CD8-positive, alpha-beta T cell (primary cell): ENCODE measurements at regions of chr14 and their contacts with region 1.

Region 1: GRCh38 chr14:105974902-105975301 is 448.5 kb downstream of the TMEM121 start:
- DNase-seq: peak; percentile 39 to 89 (median 83)
- ATAC-seq: peak; percentile 97
- H3K4me3 ChIP-seq: no peak overlapping the region
- H3K4me3 Mint-ChIP-seq: no peak overlapping the region
- H3K27ac ChIP-seq: no peak overlapping the region
- H3K27ac Mint-ChIP-seq: no peak overlapping the region
- H3K4me1 ChIP-seq: peaks cover 3% of the 10 kb centered on the region
- H3K4me1 Mint-ChIP-seq: peaks cover 6% of the 10 kb centered on the region
- H3K27me3 ChIP-seq: no peaks in the 10 kb centered on the region
- H3K27me3 Mint-ChIP-seq: peaks cover 13% of the 10 kb centered on the region
- CTCF ChIP-seq: peak; percentile 68

Region 2: GRCh38 chr14:105944632-105945610 is 30.0 kb before region 1 on chr14:
- CTCF ChIA-PET with region 1: interaction called, 18 read pairs
- POLR2A ChIA-PET with region 1: interaction called, 3 read pairs
- intact Hi-C with region 1: no loop called
- DNase-seq: peak; percentile 51 to 87 (median 80)
- ATAC-seq: peak; percentile 79
- H3K4me3 ChIP-seq: no peak overlapping the region
- H3K4me3 Mint-ChIP-seq: no peak overlapping the region
- H3K27ac ChIP-seq: no peak overlapping the region
- H3K27ac Mint-ChIP-seq: no peak overlapping the region
- H3K4me1 ChIP-seq: no peaks in the 10 kb centered on the region
- H3K4me1 Mint-ChIP-seq: peaks cover 13% of the 10 kb centered on the region
- H3K27me3 ChIP-seq: no peaks in the 10 kb centered on the region
- H3K27me3 Mint-ChIP-seq: peaks cover 7% of the 10 kb centered on the region
- CTCF ChIP-seq: peak; percentile 88

Region 3: GRCh38 chr14:105989566-105990302 is 14.8 kb after region 1 on chr14:
- CTCF ChIA-PET with region 1: interaction called, 14 read pairs
- POLR2A ChIA-PET with region 1: no interaction called
- intact Hi-C with region 1: no loop called
- DNase-seq: peak in 2 of 9 experiments; percentile 27 to 29
- ATAC-seq: peak; percentile 25
- H3K4me3 ChIP-seq: no peak overlapping the region
- H3K4me3 Mint-ChIP-seq: no peak overlapping the region
- H3K27ac ChIP-seq: no peak overlapping the region
- H3K27ac Mint-ChIP-seq: no peak overlapping the region
- H3K4me1 ChIP-seq: peaks cover 47% of the 10 kb centered on the region
- H3K4me1 Mint-ChIP-seq: peaks cover 52% of the 10 kb centered on the region
- H3K27me3 ChIP-seq: no peaks in the 10 kb centered on the region
- H3K27me3 Mint-ChIP-seq: no peaks in the 10 kb centered on the region
- CTCF ChIP-seq: no peak

Region 4: DNA sequence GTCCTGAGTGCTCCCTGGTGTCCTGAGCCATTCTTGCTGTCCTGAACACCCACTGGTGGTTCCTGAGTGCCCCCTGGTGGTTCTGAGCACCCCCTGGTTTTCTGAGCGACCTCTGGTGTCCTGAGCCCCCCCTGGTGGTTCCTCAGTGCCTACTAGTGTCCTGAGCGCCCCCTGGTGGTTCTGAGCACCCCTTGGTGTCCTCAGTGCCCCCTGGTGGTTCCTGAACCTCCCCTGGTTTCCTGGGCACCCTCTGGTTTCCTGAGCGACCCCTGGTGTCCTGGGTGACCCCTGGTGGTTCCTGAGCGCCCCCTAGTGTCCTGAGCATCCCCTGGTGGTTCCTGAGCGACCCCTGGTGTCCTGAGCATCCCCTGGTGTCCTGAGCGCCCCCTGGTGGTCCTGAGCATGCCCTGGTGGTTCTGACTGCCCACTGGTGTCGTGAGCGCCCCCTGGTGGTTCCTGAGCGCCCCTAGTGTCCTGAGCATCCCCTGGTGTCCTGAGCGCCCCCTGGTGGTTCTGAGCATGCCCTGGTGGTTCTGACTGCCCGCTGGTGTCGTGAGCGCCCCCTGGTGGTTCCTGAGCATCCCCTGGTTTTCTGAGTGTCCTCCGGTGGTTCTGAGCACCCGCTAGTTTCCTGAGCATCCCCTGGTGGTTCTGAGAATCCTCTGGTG is 24.6 kb after region 1 on chr14:
- CTCF ChIA-PET with region 1: interaction called, 42 read pairs
- POLR2A ChIA-PET with region 1: no interaction called
- intact Hi-C with region 1: loop called in 1 of 2 experiments (anchors 1 kb)
- DNase-seq: peak in 7 of 9 experiments; percentile 44 to 88 (median 85)
- ATAC-seq: peak; percentile 86
- H3K4me3 ChIP-seq: no peak overlapping the region
- H3K4me3 Mint-ChIP-seq: peak overlapping the region; percentile 3
- H3K27ac ChIP-seq: no peak overlapping the region
- H3K27ac Mint-ChIP-seq: no peak overlapping the region
- H3K4me1 ChIP-seq: peaks cover 28% of the 10 kb centered on the region
- H3K4me1 Mint-ChIP-seq: peaks cover 38% of the 10 kb centered on the region
- H3K27me3 ChIP-seq: no peaks in the 10 kb centered on the region
- H3K27me3 Mint-ChIP-seq: no peaks in the 10 kb centered on the region
- CTCF ChIP-seq: peak; percentile 70

Region 5: DNA sequence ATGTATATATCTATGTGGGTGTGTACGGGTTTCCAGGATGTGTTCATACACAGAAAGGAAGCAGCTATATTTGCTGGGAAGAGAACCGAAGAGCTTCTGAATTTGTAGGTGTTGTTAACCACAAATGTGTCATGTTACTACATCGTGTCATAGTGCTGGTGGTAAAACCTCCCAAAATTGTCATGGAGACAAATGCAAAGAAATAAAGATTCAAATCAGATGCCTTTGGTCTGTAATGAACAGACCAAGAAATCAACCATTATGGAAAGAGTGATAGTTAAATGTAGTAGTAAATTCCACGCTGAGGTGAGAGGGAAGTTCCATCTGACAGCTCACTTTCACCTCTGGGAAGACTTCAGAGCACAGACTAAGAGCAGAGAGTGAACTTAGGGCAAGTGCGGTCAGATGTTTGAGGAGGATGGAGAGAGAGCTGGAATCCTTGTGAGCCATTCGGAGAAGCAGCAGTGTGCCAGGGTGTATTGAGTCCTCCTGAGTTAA is 39.0 kb after region 1 on chr14:
- CTCF ChIA-PET with region 1: interaction called, 48 read pairs
- POLR2A ChIA-PET with region 1: no interaction called
- intact Hi-C with region 1: loop called (anchors 1 kb)
- DNase-seq: peak in 2 of 9 experiments; percentile 23 to 40
- ATAC-seq: peak; percentile 62
- H3K4me3 ChIP-seq: no peak overlapping the region
- H3K4me3 Mint-ChIP-seq: no peak overlapping the region
- H3K27ac ChIP-seq: no peak overlapping the region
- H3K27ac Mint-ChIP-seq: no peak overlapping the region
- H3K4me1 ChIP-seq: no peaks in the 10 kb centered on the region
- H3K4me1 Mint-ChIP-seq: peaks cover 10% of the 10 kb centered on the region
- H3K27me3 ChIP-seq: no peaks in the 10 kb centered on the region
- H3K27me3 Mint-ChIP-seq: peaks cover 4% of the 10 kb centered on the region
- CTCF ChIP-seq: no peak

Region 6: DNA sequence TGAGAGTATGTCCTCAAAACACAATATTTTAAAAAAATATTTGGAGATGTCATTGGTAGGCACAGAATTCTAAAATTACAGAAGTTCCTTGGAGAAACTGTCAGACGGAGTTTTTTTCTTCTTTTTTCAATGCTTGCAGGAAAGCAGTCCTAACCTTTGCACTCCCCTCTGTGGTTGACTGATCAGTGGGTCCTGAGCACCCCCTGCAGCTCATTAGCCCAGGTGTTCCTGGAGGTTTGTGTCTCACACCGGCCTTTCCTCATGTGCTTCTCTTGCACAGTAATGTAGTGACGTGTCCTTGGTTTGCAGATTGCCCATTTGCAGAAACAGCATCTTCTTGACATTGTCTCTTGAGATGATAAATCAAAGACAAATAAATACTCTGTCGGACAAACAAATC is 64.5 kb after region 1 on chr14:
- CTCF ChIA-PET with region 1: interaction called, 11 read pairs
- POLR2A ChIA-PET with region 1: no interaction called
- intact Hi-C with region 1: loop called (anchors 1 kb)
- DNase-seq: peak; percentile 16 to 68 (median 57)
- ATAC-seq: peak; percentile 81
- H3K4me3 ChIP-seq: no peak overlapping the region
- H3K4me3 Mint-ChIP-seq: no peak overlapping the region
- H3K27ac ChIP-seq: no peak overlapping the region
- H3K27ac Mint-ChIP-seq: no peak overlapping the region
- H3K4me1 ChIP-seq: no peaks in the 10 kb centered on the region
- H3K4me1 Mint-ChIP-seq: peaks cover 2% of the 10 kb centered on the region
- H3K27me3 ChIP-seq: no peaks in the 10 kb centered on the region
- H3K27me3 Mint-ChIP-seq: no peaks in the 10 kb centered on the region
- CTCF ChIP-seq: peak; percentile 59

Region 7: DNA sequence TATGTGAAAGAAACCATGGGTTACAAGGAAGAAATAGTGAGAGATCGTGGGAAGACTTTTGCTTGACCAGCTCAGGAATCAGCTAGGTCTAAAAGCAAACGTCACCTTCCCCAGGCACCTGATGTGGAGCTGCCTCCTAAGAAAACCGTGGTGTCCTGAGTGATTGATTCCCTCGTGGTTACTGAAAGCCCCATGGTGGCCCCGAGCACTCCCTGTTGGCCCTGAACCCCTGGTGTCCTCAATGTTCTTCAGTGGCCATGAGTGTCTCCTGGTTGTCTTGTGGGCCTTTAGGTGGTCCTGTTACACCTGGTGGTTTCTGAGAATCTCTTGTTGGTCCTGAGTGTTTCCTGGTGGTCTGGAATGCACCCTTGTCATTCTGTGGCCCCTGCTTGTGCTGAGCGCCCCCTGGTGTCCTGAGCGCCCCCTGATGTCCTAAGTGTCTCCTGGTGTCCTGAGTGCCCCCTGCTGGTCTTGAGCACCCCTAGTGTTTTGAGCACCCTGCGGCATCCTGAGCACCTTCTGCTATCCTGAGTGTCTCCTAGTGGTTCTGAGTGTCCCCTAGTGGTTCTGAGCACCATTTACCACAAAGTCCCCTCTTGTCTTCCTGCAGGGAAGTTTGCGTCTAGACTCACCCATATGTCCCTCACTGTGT is 70.2 kb after region 1 on chr14:
- CTCF ChIA-PET with region 1: interaction called, 3 read pairs
- POLR2A ChIA-PET with region 1: no interaction called
- intact Hi-C with region 1: loop called in 1 of 2 experiments (anchors 1 kb)
- DNase-seq: peak; percentile 58 to 87 (median 82)
- ATAC-seq: peak; percentile 99
- H3K4me3 ChIP-seq: no peak overlapping the region
- H3K4me3 Mint-ChIP-seq: no peak overlapping the region
- H3K27ac ChIP-seq: no peak overlapping the region
- H3K27ac Mint-ChIP-seq: no peak overlapping the region
- H3K4me1 ChIP-seq: no peaks in the 10 kb centered on the region
- H3K4me1 Mint-ChIP-seq: no peaks in the 10 kb centered on the region
- H3K27me3 ChIP-seq: no peaks in the 10 kb centered on the region
- H3K27me3 Mint-ChIP-seq: peaks cover 10% of the 10 kb centered on the region
- CTCF ChIP-seq: peak; percentile 52

Region 8: DNA sequence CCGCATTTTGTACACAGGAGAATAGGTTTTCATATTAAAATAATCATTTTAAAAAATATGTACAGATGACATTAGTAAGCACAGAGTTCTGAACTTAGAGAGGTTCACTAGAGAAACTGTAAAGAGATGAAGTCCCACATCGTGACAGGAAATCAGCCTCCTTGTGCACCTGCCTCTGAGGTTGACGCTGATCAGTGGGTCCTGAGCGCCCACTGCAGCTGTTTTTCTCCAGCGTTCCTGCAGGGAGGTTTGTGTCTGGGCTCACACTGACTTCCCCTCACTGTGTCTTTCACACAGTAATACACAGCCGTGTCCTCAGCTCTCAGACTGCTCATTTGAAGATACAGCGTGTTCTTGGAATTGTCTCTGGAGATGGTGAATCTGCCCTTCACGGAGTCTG is 112.9 kb after region 1 on chr14:
- CTCF ChIA-PET with region 1: no interaction called
- POLR2A ChIA-PET with region 1: no interaction called
- intact Hi-C with region 1: no loop called
- DNase-seq: peak in 1 of 9 experiments; percentile 24
- ATAC-seq: no peak
- H3K4me3 ChIP-seq: no peak overlapping the region
- H3K4me3 Mint-ChIP-seq: no peak overlapping the region
- H3K27ac ChIP-seq: no peak overlapping the region
- H3K27ac Mint-ChIP-seq: no peak overlapping the region
- H3K4me1 ChIP-seq: no peaks in the 10 kb centered on the region
- H3K4me1 Mint-ChIP-seq: no peaks in the 10 kb centered on the region
- H3K27me3 ChIP-seq: no peaks in the 10 kb centered on the region
- H3K27me3 Mint-ChIP-seq: no peaks in the 10 kb centered on the region
- CTCF ChIP-seq: no peak

Region 9: DNA sequence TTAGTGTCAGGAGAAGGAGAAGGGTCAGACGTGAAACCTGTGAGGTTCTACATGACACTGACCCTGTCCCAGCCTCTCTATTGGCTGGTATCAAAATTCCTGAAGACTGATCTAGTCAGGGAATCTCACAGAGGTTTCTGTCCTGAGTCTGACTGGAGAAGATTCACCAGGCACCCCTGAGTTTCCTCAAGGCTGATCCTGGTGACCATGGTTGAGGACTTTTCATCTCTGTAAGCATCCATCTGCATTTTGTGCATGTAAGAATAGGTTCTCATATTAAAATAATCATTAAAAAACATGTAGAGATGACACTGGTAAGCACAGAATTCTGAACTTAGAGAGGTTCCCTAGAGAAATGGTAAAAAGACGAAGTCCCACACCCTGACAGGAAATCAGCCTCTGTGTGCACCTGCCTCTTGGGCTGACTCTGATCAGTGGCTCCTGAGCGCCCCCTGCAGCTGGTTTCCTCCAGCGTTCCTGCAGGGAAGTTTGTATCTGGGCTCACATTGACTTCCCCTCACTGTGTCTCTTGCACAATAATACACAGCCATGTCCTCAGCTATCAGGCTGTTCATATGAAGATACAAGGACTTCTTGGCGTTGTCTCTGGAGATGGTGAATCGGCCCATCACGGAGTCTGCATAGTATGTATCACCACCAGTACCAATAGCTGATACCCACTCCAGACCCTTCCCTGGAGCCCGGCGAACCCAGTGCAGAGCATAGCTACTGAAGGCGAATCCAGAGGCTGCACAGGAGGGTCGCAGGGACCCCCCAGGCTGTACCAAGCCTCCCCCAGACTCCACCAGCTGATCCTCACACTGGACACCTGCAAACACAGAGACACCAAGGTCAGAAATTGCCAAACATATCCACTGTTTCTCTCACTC is 543.4 kb after region 1 on chr14:
- CTCF ChIA-PET with region 1: no interaction called
- POLR2A ChIA-PET with region 1: no interaction called
- intact Hi-C with region 1: no loop called
- DNase-seq: peak; percentile 79 to 93 (median 87)
- ATAC-seq: peak; percentile 91
- H3K4me3 ChIP-seq: no peak overlapping the region
- H3K4me3 Mint-ChIP-seq: no peak overlapping the region
- H3K27ac ChIP-seq: no peak overlapping the region
- H3K27ac Mint-ChIP-seq: no peak overlapping the region
- H3K4me1 ChIP-seq: peaks cover 8% of the 10 kb centered on the region
- H3K4me1 Mint-ChIP-seq: peaks cover 25% of the 10 kb centered on the region
- H3K27me3 ChIP-seq: no peaks in the 10 kb centered on the region
- H3K27me3 Mint-ChIP-seq: peaks cover 3% of the 10 kb centered on the region
- CTCF ChIP-seq: peak; percentile 90